Activated T-helper 2 cell treated with anti-CD3 and anti-CD28 coated beads, Interferon-gamma antibody, Interleukin-2, Interleukin-4, amounts not matched to agents 10 μg/mL and 5 μg/mL and 100 μg/mL, durations not matched to agents 14 hours and 24 hours and 36 hours (primary cell): ENCODE measurements at regions of chrX and their contacts with region 1.

Region 1: DNA sequence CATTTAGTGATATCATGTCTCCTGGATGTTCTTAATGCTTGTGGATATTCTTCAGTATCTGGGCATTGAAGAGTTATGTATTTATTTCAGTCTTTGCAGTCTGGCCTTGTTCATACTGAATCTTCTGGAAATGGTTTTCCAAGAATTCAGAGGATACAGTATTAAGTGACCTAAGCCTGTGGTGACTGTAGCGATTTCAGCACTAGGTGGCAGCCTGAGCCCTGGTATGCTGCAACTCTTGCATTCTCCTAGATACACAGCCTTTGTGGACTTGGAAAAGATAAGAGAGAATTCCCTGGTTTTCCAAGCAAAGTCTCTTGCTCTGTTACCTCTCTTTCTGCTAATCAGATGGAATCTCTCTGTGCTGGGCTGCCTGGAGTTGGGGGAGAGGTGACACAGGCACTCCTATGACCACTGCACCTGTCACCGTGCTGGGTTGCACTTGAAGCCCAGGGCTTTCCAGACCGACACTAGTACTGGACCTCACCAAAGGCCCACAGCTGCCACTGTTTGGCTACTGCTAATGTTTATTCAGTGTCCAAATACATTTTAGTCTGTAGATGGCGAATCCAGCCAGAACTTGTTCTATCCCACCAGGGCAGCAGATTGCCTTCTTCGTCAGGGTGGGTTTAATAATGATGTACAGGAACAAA is 19.3 kb upstream of the SPIN2A start:
- DNase-seq: no peak
- H3K4me3 Mint-ChIP-seq: no peak overlapping the region
- H3K27ac Mint-ChIP-seq: no peak overlapping the region
- H3K4me1 Mint-ChIP-seq: no peaks in the 10 kb centered on the region
- H3K27me3 Mint-ChIP-seq: no peaks in the 10 kb centered on the region

Region 2: DNA sequence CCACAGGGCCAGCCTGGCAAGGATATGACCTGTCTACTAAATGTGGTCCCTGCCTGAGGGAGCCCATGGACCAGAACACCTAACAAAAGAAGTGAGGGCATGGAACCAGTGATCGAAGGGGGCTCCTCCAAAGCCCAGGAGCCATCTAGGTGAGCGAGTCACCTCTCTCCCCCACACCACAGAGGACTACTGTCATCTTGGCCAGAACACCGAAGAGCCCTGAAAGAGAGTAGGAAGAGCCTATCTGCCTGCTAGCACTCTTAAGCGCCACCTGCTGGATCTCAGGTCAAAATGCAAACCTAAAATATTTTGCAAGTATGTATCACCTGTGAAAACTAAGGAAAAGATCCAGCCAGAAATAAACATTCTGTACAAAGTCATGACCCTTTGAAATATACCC is 297.4 kb after region 1 on chrX:
- intact Hi-C with region 1: loop called (anchors 1 kb)
- DNase-seq: no peak
- H3K4me3 Mint-ChIP-seq: no peak overlapping the region
- H3K27ac Mint-ChIP-seq: no peak overlapping the region
- H3K4me1 Mint-ChIP-seq: peaks cover 3% of the 10 kb centered on the region
- H3K27me3 Mint-ChIP-seq: no peaks in the 10 kb centered on the region

Region 3: DNA sequence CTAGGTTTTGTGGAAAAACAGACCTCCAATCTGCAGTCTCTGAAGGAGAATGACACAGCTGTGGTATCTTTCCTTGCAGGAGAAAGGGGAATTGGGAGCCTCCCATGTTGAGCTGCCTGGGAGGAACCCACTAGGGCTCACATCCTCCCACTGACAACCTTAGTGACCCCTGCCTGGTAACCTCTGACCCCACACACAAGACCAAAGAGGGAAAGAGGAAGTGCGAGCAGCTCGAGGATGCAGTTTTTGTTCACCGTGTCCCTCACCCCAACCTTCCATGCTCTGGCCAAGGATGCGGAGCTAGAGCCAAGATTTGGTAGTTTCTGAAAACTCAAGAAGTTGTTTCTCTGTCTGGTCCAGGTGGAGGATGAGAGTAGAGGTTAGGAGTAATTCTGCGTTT is 759.2 kb after region 1 on chrX:
- intact Hi-C with region 1: no loop called
- DNase-seq: no peak
- H3K4me3 Mint-ChIP-seq: no peak overlapping the region
- H3K27ac Mint-ChIP-seq: no peak overlapping the region
- H3K4me1 Mint-ChIP-seq: peaks cover 8% of the 10 kb centered on the region
- H3K27me3 Mint-ChIP-seq: no peaks in the 10 kb centered on the region